Activated CD8-positive, alpha-beta T cell treated with anti-CD3 and anti-CD28 coated beads for 36 hours (primary cell): ENCODE measurements at regions of chr1 and their contacts with region 1.

Region 1: GRCh38 chr1:157992031-157992832 is 1.2 kb upstream of the KIRREL1 start:
- DNase-seq: peak; percentile 67
- ATAC-seq: peak; percentile 70
- H3K4me3 Mint-ChIP-seq: no peak overlapping the region
- H3K27ac Mint-ChIP-seq: no peak overlapping the region
- H3K4me1 Mint-ChIP-seq: peaks cover 6% of the 10 kb centered on the region
- H3K27me3 Mint-ChIP-seq: peaks cover 40% of the 10 kb centered on the region
- CTCF ChIP-seq: peak; percentile 91

Region 2: DNA sequence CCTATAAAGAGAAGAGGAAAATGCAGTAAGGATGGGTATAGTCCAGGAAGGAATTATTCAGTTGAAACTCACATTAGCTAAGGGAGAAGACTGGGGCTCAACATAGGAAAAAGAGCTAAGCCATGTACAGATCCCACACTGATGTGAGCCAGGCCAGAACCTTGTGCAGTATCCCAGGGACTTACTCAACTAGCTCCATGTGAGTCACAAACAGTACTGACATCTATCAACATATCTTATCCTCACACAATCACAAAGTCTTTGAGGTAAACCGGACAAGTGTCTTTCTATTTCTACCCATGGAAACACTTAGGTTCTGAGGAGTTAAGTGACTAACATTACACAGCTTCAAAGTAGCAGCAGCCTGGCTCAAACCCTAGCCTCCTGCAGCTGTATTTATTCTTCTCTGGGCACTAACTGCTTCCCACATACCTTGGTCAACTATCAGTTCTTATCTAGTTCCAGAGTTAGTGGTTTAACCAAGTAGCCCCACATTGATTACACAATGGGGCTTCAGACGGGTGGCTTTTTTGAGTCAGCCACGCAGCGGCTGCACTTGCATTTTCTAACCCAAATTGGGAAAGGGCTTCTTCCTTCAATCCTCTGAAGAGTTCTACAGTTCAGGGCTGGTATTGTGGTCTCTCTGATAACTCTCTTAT is 160.1 kb before region 1 on chr1:
- CTCF ChIA-PET with region 1: no interaction called
- POLR2A ChIA-PET with region 1: no interaction called
- intact Hi-C with region 1: no loop called
- DNase-seq: no peak
- ATAC-seq: no peak
- H3K4me3 Mint-ChIP-seq: no peak overlapping the region
- H3K27ac Mint-ChIP-seq: no peak overlapping the region
- H3K4me1 Mint-ChIP-seq: no peaks in the 10 kb centered on the region
- H3K27me3 Mint-ChIP-seq: peaks cover 8% of the 10 kb centered on the region
- CTCF ChIP-seq: no peak

Region 3: GRCh38 chr1:157963713-157964112 is 28.5 kb before region 1 on chr1:
- CTCF ChIA-PET with region 1: interaction called, 18 read pairs
- POLR2A ChIA-PET with region 1: no interaction called
- intact Hi-C with region 1: no loop called
- DNase-seq: peak; percentile 66
- ATAC-seq: peak; percentile 74
- H3K4me3 Mint-ChIP-seq: no peak overlapping the region
- H3K27ac Mint-ChIP-seq: no peak overlapping the region
- H3K4me1 Mint-ChIP-seq: no peaks in the 10 kb centered on the region
- H3K27me3 Mint-ChIP-seq: peaks cover 6% of the 10 kb centered on the region
- CTCF ChIP-seq: peak; percentile 83

Region 4: GRCh38 chr1:158011714-158012113 is 19.5 kb after region 1 on chr1:
- CTCF ChIA-PET with region 1: interaction called, 12 read pairs
- POLR2A ChIA-PET with region 1: no interaction called
- intact Hi-C with region 1: no loop called
- DNase-seq: no peak
- ATAC-seq: no peak
- H3K4me3 Mint-ChIP-seq: no peak overlapping the region
- H3K27ac Mint-ChIP-seq: no peak overlapping the region
- H3K4me1 Mint-ChIP-seq: no peaks in the 10 kb centered on the region
- H3K27me3 Mint-ChIP-seq: peaks cover 12% of the 10 kb centered on the region
- CTCF ChIP-seq: no peak

Region 5: GRCh38 chr1:158035976-158036583 is 43.8 kb after region 1 on chr1:
- CTCF ChIA-PET with region 1: interaction called, 14 read pairs
- POLR2A ChIA-PET with region 1: no interaction called
- intact Hi-C with region 1: no loop called
- DNase-seq: peak; percentile 42
- ATAC-seq: no peak
- H3K4me3 Mint-ChIP-seq: no peak overlapping the region
- H3K27ac Mint-ChIP-seq: no peak overlapping the region
- H3K4me1 Mint-ChIP-seq: no peaks in the 10 kb centered on the region
- H3K27me3 Mint-ChIP-seq: no peaks in the 10 kb centered on the region
- CTCF ChIP-seq: peak; percentile 84

Region 6: DNA sequence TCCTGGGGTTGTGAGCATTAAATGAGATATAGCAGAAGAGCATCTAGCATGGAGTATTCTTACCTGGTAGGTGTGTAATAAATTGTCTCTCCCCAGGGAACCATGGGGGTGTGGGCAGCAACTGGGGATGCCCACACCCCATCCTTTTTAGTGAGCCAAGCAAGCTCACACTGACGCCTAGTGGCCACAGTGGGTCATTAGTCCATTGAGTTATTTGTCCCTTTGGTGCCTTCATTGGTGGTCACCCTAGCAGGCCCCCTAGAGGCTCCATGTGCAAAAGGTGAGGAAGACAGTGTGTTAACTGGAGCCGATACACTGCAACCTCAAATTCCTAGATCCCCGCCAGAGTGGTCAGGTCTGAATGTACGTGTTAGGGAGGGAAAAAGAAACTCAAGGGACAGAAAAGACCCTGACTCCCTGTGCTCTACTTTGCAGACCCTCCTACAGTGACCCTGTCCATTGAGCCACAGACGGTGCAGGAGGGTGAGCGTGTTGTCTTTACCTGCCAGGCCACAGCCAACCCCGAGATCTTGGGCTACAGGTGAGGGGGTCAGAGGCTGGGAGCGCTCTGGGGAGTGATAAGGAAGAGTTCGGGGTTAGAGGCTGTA is 95.2 kb after region 1 on chr1:
- CTCF ChIA-PET with region 1: interaction called, 15 read pairs
- POLR2A ChIA-PET with region 1: no interaction called
- intact Hi-C with region 1: no loop called
- DNase-seq: peak; percentile 62
- ATAC-seq: peak; percentile 83
- H3K4me3 Mint-ChIP-seq: no peak overlapping the region
- H3K27ac Mint-ChIP-seq: no peak overlapping the region
- H3K4me1 Mint-ChIP-seq: no peaks in the 10 kb centered on the region
- H3K27me3 Mint-ChIP-seq: no peaks in the 10 kb centered on the region
- CTCF ChIP-seq: peak; percentile 77

Region 7: GRCh38 chr1:158095737-158096335 is 103.6 kb after region 1 on chr1:
- CTCF ChIA-PET with region 1: interaction called, 14 read pairs
- POLR2A ChIA-PET with region 1: interaction called, 4 read pairs
- intact Hi-C with region 1: no loop called
- DNase-seq: peak; percentile 56
- ATAC-seq: peak; percentile 86
- H3K4me3 Mint-ChIP-seq: no peak overlapping the region
- H3K27ac Mint-ChIP-seq: no peak overlapping the region
- H3K4me1 Mint-ChIP-seq: no peaks in the 10 kb centered on the region
- H3K27me3 Mint-ChIP-seq: no peaks in the 10 kb centered on the region
- CTCF ChIP-seq: peak; percentile 67